ENCODE measurements at regions of chr9 and their contacts with region 1.

Region 1: DNA sequence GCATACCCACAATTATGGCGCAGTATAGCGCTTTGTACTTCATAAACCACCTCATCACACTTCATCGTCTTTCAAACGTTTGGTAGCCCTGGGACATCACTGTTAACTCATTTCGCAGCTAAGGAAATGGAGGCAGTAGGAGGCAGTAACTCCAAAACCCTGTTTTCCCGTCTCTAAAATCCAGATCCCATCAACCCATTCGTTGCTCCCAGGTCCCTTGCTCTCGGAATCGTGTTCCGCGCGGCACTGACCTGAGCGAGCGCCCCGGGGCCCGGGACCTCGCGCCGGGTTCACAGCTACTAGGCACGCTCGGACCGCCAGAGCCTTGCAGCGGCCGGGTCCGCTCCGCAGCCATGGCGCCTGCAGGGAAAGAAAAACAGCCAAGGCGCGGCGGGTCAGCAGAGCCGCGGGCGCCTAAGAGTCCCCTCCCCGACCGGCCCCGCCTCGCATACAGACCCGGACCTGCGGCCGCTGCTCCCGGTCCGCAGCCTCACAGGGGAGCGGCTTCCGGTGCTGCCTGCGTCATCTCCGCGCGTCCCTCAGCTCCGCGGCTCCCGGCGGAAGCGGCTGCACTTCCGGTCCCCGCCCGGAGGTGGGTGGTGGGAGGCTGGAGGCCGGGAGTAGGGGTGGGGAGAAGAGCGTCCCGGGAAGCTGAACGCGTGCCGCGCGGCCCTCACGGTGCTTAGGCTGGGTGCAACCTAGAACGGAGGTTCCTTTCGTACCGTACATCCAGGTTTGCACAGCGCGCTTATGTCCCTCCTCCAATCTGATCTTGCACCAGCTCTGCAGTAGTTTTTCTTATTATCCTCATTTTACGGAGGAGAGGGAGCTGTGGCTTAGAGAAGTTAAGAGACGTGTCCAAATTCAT is at the start of gene FBXW2:
- DNase-seq: peak; percentile 78 to 94
- H3K4me3 ChIP-seq: peak within 1 kb of the TSS; percentile 83
- H3K27ac ChIP-seq: peak within 1 kb of the TSS; percentile 74
- H3K4me1 ChIP-seq: peaks cover 26% of the 10 kb centered on the region
- H3K27me3 ChIP-seq: no peaks in the 10 kb centered on the region
- CTCF ChIP-seq: no peak
- total RNA-seq, gene FBXW2: 69.6 and 77.7 TPM in 2 replicates

Region 2: GRCh38 chr9:120852240-120853010 is 59.3 kb after region 1 on chr9:
- CTCF ChIA-PET with region 1: no interaction called
- POLR2A ChIA-PET with region 1: interaction called, 11 read pairs
- intact Hi-C with region 1: no loop called
- DNase-seq: no peak
- H3K4me3 ChIP-seq: no peak overlapping the region
- H3K27ac ChIP-seq: no peak overlapping the region
- H3K4me1 ChIP-seq: no peaks in the 10 kb centered on the region
- H3K27me3 ChIP-seq: no peaks in the 10 kb centered on the region
- CTCF ChIP-seq: no peak

Region 3: GRCh38 chr9:120868676-120869359 is 75.7 kb after region 1 on chr9:
- CTCF ChIA-PET with region 1: no interaction called
- POLR2A ChIA-PET with region 1: interaction called, 5 read pairs
- intact Hi-C with region 1: loop called (anchors 5 kb)
- DNase-seq: peak; percentile 92 to 99
- H3K4me3 ChIP-seq: peak overlapping the region; percentile 21; the same call in 1 of the 2 replicates
- H3K27ac ChIP-seq: no peak overlapping the region
- H3K4me1 ChIP-seq: peaks cover 21% of the 10 kb centered on the region
- H3K27me3 ChIP-seq: no peaks in the 10 kb centered on the region
- CTCF ChIP-seq: no peak

Region 4: DNA sequence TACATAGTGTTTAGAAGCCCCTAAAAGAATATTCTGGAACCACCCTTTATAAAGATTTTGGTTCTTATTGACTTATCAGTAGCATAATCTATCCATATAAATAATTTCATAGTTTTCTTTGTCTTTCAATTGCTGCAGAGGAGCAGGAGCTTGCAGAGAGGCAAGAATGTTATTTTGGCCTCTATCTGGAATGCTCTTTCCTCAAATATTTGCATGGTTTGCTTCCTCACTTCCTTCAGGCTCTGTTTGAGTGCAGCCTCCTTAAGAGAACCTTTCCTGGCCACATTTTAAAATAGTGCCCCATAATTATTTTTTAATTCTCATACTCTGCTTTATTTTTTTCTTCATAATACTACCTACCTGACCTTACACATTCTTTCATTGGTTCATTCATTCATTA is 255.5 kb after region 1 on chr9:
- CTCF ChIA-PET with region 1: no interaction called
- POLR2A ChIA-PET with region 1: no interaction called
- intact Hi-C with region 1: no loop called
- DNase-seq: no peak
- H3K4me3 ChIP-seq: no peak overlapping the region
- H3K27ac ChIP-seq: no peak overlapping the region
- H3K4me1 ChIP-seq: no peaks in the 10 kb centered on the region; the same call in 1 of the 2 replicates
- H3K27me3 ChIP-seq: no peaks in the 10 kb centered on the region
- CTCF ChIP-seq: no peak

Region 5: DNA sequence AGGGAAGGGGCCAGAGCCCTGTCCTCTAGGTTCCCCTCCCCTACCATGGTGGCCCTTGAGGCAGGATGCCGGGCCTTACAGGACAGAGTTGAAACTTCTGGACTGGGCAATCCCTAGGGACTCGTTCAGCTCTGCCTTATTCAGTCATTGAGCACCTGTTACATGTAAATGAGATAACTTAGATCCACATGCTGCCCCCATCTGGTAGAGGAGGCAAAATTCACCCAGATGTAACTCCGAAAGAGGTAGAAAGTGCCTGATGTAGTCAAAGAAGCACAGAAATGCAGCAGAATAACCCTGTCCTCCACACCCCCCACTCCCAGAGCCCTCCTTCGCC is 705.0 kb after region 1 on chr9:
- CTCF ChIA-PET with region 1: interaction called, 23 read pairs
- POLR2A ChIA-PET with region 1: no interaction called
- intact Hi-C with region 1: no loop called
- DNase-seq: peak; percentile 65 to 66
- H3K4me3 ChIP-seq: 0 out of 2 replicates have a peak overlapping the region, but pooled peaks have one; percentile 58
- H3K27ac ChIP-seq: no peak overlapping the region
- H3K4me1 ChIP-seq: peaks cover 16% of the 10 kb centered on the region
- H3K27me3 ChIP-seq: peaks cover 43% of the 10 kb centered on the region
- CTCF ChIP-seq: peak; percentile 72

Measured in PC-9 (cell line).